ENCODE measurements at regions of chr12 and their contacts with region 1.

Region 1: DNA sequence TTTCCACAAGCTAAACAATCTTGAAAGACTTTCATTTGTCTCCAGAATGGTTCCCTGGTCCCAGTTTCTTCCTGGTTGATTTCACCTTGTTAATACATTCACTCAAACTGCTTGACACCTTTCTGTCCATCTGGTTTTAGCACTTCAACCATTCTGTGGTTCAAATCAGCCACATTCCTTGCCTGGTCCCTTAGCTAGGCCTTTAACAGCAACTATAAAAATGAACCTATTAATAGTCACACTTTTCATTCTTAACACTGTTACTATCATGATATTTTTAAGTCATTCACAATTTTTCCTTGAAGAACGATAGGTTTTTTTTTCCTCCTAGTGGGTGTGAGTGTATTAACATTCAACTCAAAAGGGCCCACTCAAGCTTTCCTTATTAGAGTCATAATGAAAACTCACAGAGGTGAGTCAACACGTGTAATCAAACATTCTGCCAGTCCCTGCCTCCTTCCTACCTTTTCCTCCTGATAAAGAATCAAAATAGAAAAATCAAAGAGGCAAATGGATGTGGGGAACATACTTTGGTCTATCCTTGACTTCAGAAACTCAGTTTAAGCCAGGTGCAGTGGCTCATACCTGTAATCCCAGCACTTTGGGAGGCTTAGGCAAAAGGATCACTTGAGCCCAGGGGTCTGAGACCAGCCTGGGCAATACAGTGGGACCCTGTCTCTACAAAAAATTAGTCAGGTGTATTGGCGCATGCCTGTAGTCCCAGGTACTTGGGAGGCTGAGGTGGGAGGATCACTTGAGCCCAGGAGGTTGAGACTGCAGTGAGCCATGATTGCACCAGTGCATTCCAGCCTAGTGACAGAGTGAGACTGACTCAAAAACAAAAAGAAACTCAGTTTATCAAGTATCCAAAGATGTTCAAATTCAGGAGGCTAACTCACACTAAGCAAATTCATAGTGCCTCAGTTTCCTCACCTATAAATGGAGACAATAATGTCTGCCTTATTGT is 34.5 kb upstream of the CCNT1 start:
- DNase-seq: peak; percentile 27
- H3K4me3 Mint-ChIP-seq: no peak overlapping the region
- H3K27ac Mint-ChIP-seq: peak overlapping the region; percentile 76
- H3K4me1 Mint-ChIP-seq: peaks cover 20% of the 10 kb centered on the region
- H3K27me3 Mint-ChIP-seq: no peaks in the 10 kb centered on the region

Region 2: GRCh38 chr12:48681738-48682532 is 69.1 kb before region 1 on chr12 and contains the start of gene KANSL2:
- CTCF ChIA-PET with region 1: no interaction called
- POLR2A ChIA-PET with region 1: interaction called, 3 read pairs
- intact Hi-C with region 1: loop called (anchors 2 kb)
- DNase-seq: peak; percentile 99
- H3K4me3 Mint-ChIP-seq: peak within 1 kb of the TSS; percentile 99
- H3K27ac Mint-ChIP-seq: peak within 1 kb of the TSS; percentile 94
- H3K4me1 Mint-ChIP-seq: peaks cover 41% of the 10 kb centered on the region
- H3K27me3 Mint-ChIP-seq: no peaks in the 10 kb centered on the region
- total RNA-seq, gene KANSL2: 45.7 to 48.4 TPM

Region 3: DNA sequence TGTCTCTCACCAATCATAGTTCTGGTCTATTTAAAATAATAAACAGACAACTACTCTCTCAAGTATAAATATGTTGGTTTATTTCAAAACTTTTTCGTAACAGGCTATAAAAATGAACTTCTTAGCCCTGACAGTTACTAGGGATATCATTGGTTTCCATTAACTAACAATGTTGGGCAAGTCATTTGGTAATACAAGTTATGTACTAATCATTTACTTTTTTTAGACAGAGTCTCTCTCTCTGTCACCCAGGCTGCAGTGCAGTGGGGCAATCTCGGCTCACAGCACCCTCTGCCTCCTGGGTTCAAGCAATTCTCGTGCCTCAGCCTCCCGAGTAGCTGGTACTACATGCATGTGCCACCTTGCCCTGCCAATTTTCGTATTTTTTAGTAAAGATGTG is 54.4 kb before region 1 on chr12:
- CTCF ChIA-PET with region 1: no interaction called
- POLR2A ChIA-PET with region 1: no interaction called
- intact Hi-C with region 1: no loop called
- DNase-seq: no peak
- H3K4me3 Mint-ChIP-seq: no peak overlapping the region
- H3K27ac Mint-ChIP-seq: no peak overlapping the region
- H3K4me1 Mint-ChIP-seq: peaks cover 10% of the 10 kb centered on the region
- H3K27me3 Mint-ChIP-seq: no peaks in the 10 kb centered on the region